ENCODE measurements at regions of chr12 and their contacts with region 1.

Region 1: DNA sequence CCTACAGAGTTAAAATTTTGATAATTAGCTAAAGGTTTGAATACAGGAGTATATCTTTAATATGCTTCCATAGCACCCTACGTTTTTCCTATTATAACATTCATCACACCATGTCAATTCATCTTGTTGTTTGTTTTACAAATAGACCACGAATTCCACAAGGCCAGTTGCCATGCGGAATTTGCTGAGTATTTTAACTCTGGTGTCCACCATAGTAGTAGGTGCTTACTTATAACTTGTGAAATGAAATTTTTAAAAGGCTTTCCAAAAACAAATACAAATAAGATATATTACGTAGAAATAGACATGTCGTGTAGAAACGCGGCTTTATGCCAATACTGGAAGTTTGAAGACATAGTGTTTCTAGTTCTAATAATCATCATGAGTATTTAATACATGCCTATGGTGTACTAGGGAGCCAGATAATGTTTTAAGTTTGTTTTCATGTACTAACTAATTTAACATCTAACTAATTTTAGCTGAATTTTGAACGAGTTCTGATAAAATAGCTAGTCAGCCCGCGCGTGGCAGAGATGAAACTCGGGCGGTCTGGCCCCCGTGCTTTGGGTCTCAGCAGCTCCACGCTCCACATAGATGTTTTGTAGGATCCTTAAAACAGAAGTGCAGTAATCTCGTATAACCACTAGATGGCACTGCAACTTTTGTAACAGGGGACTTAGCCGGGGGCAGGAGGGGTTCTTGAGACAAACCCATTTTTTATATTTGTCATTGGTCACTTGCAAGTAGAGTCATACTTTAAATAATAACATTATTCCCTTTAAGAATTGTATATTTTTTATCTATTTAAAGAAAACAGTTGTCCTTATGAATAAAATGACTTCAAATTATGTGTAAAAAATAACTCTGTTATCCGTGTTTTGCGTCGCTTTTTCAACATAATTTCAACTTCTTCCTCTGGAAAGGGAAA is 10.2 kb downstream of the CD69 start:
- DNase-seq: peak; percentile 55
- H3K4me3 Mint-ChIP-seq: peak overlapping the region; percentile 58
- H3K27ac Mint-ChIP-seq: peak overlapping the region; percentile 79
- H3K4me1 Mint-ChIP-seq: peaks cover 62% of the 10 kb centered on the region
- H3K27me3 Mint-ChIP-seq: no peaks in the 10 kb centered on the region

Region 2: DNA sequence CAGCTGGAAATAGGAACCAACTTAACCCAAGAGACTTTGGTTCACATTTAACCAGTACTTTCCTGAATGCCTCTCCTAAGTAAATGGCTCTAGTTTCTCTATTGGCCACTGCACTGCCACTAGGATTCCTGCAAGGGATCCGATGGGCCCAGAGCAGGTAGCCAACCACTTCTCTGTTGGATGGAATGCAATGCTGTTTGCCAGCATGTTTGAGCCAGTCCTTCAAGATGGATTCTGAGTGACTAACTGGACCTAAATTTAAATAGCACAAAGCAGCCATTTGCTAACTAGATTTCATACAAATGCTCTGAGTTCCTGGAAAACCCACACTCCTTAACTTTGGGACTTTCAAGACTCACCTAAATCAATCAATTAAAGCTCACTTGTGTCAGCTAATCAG is 90.5 kb before region 1 on chr12:
- intact Hi-C with region 1: no loop called
- DNase-seq: no peak
- H3K4me3 Mint-ChIP-seq: no peak overlapping the region
- H3K27ac Mint-ChIP-seq: peak overlapping the region; percentile 32
- H3K4me1 Mint-ChIP-seq: peaks cover 96% of the 10 kb centered on the region
- H3K27me3 Mint-ChIP-seq: no peaks in the 10 kb centered on the region

Region 3: DNA sequence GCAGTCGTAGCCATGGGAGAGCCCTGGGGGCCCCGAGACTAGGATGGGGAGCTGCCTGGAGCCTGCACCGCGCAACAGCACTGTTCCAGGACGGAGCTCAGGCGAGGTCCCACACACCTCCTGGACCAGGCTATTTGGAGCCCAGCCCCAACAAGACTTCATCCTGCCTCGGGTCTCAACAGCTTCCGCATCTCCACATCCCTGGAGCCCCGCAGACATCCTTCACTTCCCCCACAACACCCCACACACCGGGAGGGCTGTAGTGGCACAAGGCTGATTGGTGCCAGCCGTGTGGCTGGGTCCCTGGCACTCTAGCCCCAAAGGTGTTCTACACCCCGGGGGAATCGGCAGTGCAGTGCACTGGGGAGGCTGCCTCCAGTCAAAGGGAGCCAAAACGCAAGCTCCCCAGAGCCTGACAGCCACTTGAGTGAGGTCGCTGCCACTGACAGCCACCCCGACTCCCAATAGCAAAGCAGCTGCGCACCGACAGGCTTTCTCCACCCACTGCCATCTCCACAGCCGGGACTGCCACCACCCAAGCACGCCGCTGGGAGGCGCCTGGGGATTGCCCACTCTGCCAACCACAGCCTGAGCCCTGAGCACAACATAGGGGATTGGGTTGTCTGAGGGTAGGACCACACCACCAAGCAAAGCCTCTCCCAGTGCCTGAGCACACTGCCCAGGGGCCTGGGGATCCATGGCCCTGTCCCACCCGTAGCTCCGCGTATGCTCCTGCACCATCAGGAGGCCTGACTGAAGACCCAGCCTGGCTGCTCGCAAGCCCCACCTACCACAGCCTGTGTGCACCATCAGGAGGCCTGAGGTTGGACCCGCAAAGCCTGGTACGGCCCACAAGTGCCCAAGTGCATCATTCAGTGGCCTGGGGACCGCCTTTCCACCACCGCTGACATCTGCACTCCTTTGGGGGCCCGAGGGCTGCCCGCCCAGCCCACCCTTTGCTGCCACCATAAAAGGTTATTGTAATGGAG is 63.6 kb after region 1 on chr12:
- intact Hi-C with region 1: loop called (anchors 1 kb)
- DNase-seq: peak; percentile 90
- H3K4me3 Mint-ChIP-seq: peak overlapping the region; percentile 87
- H3K27ac Mint-ChIP-seq: peak overlapping the region; percentile 61
- H3K4me1 Mint-ChIP-seq: peaks cover 35% of the 10 kb centered on the region
- H3K27me3 Mint-ChIP-seq: peaks cover 21% of the 10 kb centered on the region

Region 4: DNA sequence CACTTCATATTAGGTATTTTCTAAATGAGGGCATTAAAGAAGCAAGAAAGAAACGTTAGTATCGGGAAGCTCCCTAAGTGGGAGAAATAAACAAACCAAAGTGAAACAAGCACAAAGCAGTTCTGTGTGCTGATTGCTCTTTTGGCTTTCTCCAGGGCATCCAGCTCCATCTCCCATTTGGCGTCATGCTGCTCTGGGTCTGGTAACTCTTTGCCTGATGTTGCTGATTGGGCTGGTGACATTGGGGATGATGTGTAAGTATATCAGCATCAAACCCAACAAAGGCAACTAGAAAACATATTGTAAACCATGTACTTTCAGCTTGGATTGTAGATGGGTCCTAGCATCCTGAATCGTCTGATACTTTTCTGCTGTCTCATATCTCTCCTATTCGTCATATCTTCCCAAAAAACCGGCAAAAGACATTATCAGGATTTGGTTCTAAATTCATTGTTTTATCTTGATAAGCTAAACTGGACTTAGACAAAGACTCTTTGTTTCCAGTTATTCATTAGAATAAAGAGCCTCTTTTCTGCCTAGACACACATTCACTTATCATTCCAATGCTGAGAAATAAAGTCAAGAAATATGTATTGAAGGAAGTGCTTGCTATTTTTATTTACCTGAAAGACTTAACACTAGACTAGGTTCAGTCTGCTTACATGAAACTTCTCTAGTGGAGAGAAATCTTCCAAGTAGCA is 262.2 kb after region 1 on chr12:
- intact Hi-C with region 1: loop called (anchors 1 kb)
- DNase-seq: no peak
- H3K4me3 Mint-ChIP-seq: no peak overlapping the region
- H3K27ac Mint-ChIP-seq: no peak overlapping the region
- H3K4me1 Mint-ChIP-seq: no peaks in the 10 kb centered on the region
- H3K27me3 Mint-ChIP-seq: peaks cover 33% of the 10 kb centered on the region

Region 5: GRCh38 chr12:10190558-10191388 is 440.2 kb after region 1 on chr12:
- intact Hi-C with region 1: loop called (anchors 1 kb)
- DNase-seq: peak; percentile 23
- H3K4me3 Mint-ChIP-seq: no peak overlapping the region
- H3K27ac Mint-ChIP-seq: no peak overlapping the region
- H3K4me1 Mint-ChIP-seq: peaks cover 6% of the 10 kb centered on the region
- H3K27me3 Mint-ChIP-seq: peaks cover 35% of the 10 kb centered on the region

Measured in activated T-helper 1 cell treated with anti-CD3 and anti-CD28 coated beads, Interleukin-12 subunit alpha, Interleukin-12 subunit beta, Interleukin-2, Interleukin-4 antibody, amounts not matched to agents 30 ng/mL and 10 ng/mL and 1 ng/mL, durations not matched to agents 14 hours and 24 hours and 36 hours (primary cell).